ENCODE measurements at regions of chr12 and their contacts with region 1.

Region 1: GRCh38 chr12:7877420-7877819 is 4.7 kb upstream of the SLC2A14 start:
- DNase-seq: no peak
- H3K4me3 ChIP-seq: no peak overlapping the region
- H3K27ac ChIP-seq: no peak overlapping the region
- H3K4me1 ChIP-seq: no peaks in the 10 kb centered on the region
- H3K27me3 ChIP-seq: peaks cover 13% of the 10 kb centered on the region
- CTCF ChIP-seq: no peak
- EP300 ChIP-seq: no peak
- POLR2A ChIP-seq: no peak

Region 2: GRCh38 chr12:8899830-8900229 is 1022.4 kb after region 1 on chr12:
- in situ Hi-C with region 1: no loop called
- intact Hi-C with region 1: loop called (anchors 5 kb)
- DNase-seq: no peak
- H3K4me3 ChIP-seq: no peak overlapping the region
- H3K27ac ChIP-seq: no peak overlapping the region
- H3K4me1 ChIP-seq: no peaks in the 10 kb centered on the region
- H3K27me3 ChIP-seq: no peaks in the 10 kb centered on the region
- CTCF ChIP-seq: no peak
- EP300 ChIP-seq: no peak
- POLR2A ChIP-seq: no peak